ENCODE measurements at regions of chr2 and their contacts with region 1.

Region 1: DNA sequence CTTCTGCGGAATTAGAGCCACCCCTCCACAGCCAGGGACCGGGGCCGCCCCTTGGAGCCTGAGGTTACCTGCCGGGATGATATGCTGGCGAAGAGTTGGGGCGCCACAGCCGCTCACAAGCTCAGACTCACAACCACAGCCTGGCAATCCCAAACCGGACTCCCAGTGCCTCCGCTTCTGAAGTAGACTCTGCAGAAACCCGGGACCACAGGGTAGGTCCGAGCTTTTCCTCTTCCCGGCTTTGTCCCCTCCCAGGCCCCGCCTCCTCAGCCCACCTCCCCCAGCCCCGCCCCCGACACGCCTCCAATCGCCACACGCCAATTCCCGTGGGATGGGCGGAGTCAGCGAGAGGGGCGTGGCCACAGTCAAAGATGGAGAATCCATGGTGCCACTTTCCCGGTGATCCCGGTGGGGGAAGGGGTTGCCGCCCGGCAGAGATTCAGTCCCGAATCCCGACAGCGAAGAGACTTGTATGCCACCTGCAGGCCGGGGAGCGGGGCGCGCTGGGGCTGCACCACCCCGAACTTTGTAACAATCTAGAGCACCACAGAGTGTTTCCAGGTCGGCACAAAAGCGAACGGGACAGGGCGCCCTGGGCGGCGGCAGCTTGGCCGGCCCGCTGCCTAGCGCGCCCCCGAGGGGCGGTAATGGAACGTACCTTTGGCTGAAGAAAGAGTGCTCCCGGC is at the start of gene IDH1:
- DNase-seq: peak; percentile 81 to 96
- H3K4me3 ChIP-seq: peak within 1 kb of the TSS; percentile 84
- H3K27ac ChIP-seq: peak within 1 kb of the TSS; percentile 95
- H3K4me1 ChIP-seq: peaks cover 34% of the 10 kb centered on the region
- H3K27me3 ChIP-seq: no peaks in the 10 kb centered on the region
- CTCF ChIP-seq: peak; percentile 60
- total RNA-seq, gene IDH1: 193 and 227 TPM in 2 replicates

Region 2: GRCh38 chr2:207746131-207746530 is 508.9 kb before region 1 on chr2:
- CTCF ChIA-PET with region 1: no interaction called
- POLR2A ChIA-PET with region 1: no interaction called
- intact Hi-C with region 1: loop called (anchors 10 kb)
- DNase-seq: peak; percentile 40 to 50
- H3K4me3 ChIP-seq: no peak overlapping the region
- H3K27ac ChIP-seq: no peak overlapping the region
- H3K4me1 ChIP-seq: peaks cover 21% of the 10 kb centered on the region
- H3K27me3 ChIP-seq: no peaks in the 10 kb centered on the region
- CTCF ChIP-seq: peak; percentile 84

Region 3: GRCh38 chr2:207983641-207984042 is 271.4 kb before region 1 on chr2:
- CTCF ChIA-PET with region 1: no interaction called
- POLR2A ChIA-PET with region 1: no interaction called
- intact Hi-C with region 1: no loop called
- DNase-seq: no peak
- H3K4me3 ChIP-seq: no peak overlapping the region
- H3K27ac ChIP-seq: no peak overlapping the region
- H3K4me1 ChIP-seq: no peaks in the 10 kb centered on the region
- H3K27me3 ChIP-seq: no peaks in the 10 kb centered on the region
- CTCF ChIP-seq: no peak

Region 4: DNA sequence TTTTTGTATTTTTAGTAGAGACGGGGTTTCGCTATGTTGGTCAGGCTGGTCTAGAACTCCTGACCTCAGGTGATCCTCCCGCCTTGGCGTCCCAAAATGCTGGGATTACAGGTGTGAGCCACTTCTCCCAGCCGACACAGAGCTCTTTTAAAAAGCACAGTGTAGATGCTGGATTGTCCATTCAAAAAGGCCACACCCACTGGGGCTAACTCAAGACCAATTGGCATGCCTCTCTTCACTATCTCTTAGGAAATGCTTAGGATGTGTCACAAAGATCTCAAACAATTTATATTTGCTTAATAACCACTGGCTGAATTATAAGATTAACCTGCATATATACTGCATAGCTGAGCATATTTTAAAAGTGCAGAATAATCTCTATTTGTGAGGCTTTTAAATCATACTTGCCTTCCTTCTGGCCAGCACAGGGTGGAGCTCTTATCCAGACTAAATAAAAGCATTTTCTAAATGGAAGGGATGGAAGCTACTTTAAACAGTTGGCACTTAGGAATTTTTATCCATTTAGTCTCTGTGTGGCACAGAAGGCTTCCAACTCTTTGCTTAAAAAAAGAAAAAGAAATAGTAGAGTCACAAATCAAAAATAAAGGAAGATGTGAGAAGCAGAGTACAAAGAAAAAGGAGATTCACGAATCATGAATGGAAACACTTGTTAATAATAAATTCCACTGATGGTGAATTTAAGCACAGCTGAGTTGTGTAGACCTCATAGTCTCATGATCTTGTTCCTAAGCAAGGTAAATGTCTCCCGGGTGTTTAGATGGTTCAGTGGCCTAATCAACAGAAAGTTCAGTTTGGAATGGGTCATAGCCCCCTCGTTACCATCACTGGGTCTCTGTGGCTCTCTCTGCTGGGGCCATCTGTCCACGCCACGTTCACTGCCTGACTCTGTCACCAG is 153.0 kb before region 1 on chr2:
- CTCF ChIA-PET with region 1: interaction called, 8 read pairs
- POLR2A ChIA-PET with region 1: interaction called, 3 read pairs
- intact Hi-C with region 1: loop called (anchors 1 kb)
- DNase-seq: peak in 1 of 2 experiments; percentile 38
- H3K4me3 ChIP-seq: no peak overlapping the region
- H3K27ac ChIP-seq: no peak overlapping the region
- H3K4me1 ChIP-seq: no peaks in the 10 kb centered on the region
- H3K27me3 ChIP-seq: no peaks in the 10 kb centered on the region
- CTCF ChIP-seq: peak; percentile 65

Region 5: GRCh38 chr2:208192612-208193236 is 62.3 kb before region 1 on chr2:
- CTCF ChIA-PET with region 1: no interaction called
- POLR2A ChIA-PET with region 1: interaction called, 12 read pairs
- intact Hi-C with region 1: no loop called
- DNase-seq: peak; percentile 45 to 75
- H3K4me3 ChIP-seq: no peak overlapping the region
- H3K27ac ChIP-seq: no peak overlapping the region
- H3K4me1 ChIP-seq: peaks cover 13% of the 10 kb centered on the region
- H3K27me3 ChIP-seq: no peaks in the 10 kb centered on the region
- CTCF ChIP-seq: no peak

Region 6: GRCh38 chr2:208373460-208374089 is 118.6 kb after region 1 on chr2:
- CTCF ChIA-PET with region 1: interaction called, 15 read pairs
- POLR2A ChIA-PET with region 1: no interaction called
- intact Hi-C with region 1: no loop called
- DNase-seq: no peak
- H3K4me3 ChIP-seq: no peak overlapping the region
- H3K27ac ChIP-seq: no peak overlapping the region
- H3K4me1 ChIP-seq: peaks cover 14% of the 10 kb centered on the region
- H3K27me3 ChIP-seq: no peaks in the 10 kb centered on the region
- CTCF ChIP-seq: peak; percentile 84